ENCODE measurements at regions of chrX and their contacts with region 1.

Region 1: DNA sequence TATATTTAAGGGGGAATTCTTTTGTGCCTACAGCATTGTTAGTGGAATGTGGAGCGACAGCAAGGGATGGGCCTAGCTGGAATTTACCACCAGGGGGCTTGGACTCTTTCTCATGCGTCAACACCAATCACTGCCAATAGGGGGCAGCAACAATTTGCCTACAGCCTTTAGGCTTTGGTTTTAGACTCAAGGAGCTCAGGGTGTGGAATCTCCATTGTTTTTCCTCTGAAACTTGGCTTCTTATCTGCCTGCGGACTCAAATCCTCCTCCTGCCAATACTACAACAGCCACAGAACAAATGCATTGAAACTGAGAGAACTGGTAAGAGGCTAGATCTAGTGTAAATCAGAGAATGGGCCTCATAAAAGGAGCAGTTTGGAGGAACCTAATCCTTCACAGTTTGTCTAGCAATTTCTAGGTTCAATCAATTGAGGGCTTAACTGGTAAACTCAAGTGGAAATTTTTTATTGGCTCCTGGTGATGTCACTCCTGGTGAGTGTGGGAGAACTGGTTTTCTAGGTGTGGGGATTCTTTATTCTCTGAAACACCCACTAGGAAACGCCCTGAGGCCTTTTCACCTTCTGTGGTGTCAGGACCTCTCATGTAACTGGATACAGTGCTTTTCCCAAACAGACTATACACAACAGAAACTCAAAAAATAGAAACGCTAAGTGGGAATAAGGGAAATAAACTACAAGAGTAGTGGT is 27.9 kb upstream of the TMSB4X start:
- DNase-seq: peak; percentile 57 to 83
- ATAC-seq: peak; percentile 78

Region 2: GRCh38 chrX:12497832-12498591 is 449.0 kb before region 1 on chrX:
- intact Hi-C with region 1: no loop called
- DNase-seq: no peak
- ATAC-seq: no peak

Region 3: DNA sequence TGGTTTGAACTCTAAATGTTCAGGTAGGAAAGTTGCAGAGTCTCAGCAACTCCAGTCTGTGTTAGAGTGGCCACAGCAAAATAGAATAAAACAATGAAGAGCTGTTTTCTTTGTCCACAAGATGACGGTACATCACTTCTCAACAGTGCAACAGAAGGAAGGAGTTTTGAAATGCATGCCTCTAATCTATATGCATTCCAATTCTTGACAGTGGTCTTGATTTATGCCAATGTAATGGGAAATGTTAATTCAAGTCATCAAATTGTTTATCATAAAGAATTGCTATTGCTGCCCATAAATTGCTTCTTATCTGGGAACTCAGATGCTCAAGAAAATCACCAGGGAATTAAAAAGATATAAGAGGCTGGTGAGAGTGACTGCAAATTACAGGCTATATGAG is 351.3 kb before region 1 on chrX:
- intact Hi-C with region 1: no loop called
- DNase-seq: no peak
- ATAC-seq: no peak

Region 4: DNA sequence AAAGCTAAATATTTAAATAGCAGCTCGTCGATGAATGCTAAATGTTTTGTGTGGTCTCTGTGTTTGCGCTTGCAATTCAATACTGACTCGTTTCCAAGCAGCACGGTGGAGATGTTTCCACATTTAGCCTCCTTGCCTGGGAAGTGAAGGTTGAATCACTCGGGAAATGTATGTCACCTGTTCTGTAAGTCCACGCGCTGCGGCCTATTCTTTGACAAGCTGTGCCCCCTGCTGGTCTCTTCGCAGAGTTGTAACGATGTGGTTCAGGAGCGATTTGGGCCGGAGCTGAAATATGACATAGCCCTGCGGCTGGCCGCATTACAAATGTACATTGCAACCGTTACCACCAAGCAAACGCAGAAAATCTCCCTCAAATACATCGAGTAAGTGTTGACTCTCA is 245.4 kb before region 1 on chrX:
- intact Hi-C with region 1: no loop called
- DNase-seq: peak; percentile 30 to 48
- ATAC-seq: peak; percentile 71

Region 5: DNA sequence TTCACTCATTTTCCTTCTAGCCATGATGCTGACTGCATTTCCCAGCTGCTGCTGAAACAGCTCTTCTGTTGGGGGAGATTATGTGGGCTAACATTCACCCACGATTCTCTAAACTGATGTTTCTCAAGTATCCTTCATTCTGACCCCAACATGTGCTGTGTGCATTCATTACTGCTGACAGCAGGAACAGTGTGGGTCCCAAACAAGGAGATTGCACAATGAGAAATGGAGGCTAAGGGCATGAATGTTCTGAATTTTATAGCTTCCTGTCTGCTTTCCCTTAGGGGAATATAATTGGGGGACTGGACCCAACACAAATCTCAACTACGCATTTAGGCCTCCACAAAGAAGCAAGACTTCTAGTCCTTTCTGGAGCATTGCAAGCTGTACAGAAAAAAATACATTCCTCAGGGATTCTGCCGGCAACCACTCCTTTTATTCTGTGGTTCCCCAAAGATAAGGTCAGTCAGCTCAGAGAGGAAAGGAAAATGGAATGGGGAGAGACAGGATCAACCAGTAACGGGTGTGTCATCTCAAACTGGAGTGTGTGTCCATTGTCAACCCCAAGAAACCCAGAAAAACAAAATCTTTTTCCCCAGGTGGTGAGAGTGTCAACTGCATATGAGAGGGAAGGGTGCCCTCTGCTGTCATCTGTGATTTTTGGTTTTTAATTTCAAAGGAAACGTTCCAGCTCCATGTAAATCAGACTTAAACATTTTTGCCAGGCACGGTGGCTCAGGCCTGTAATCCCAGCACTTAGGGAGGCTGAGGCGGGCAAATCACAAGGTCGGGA is 540.9 kb after region 1 on chrX:
- intact Hi-C with region 1: loop called in 1 of 2 experiments (anchors 5 kb)
- DNase-seq: peak in 1 of 2 donors; percentile 49
- ATAC-seq: peak; percentile 61

Region 6: DNA sequence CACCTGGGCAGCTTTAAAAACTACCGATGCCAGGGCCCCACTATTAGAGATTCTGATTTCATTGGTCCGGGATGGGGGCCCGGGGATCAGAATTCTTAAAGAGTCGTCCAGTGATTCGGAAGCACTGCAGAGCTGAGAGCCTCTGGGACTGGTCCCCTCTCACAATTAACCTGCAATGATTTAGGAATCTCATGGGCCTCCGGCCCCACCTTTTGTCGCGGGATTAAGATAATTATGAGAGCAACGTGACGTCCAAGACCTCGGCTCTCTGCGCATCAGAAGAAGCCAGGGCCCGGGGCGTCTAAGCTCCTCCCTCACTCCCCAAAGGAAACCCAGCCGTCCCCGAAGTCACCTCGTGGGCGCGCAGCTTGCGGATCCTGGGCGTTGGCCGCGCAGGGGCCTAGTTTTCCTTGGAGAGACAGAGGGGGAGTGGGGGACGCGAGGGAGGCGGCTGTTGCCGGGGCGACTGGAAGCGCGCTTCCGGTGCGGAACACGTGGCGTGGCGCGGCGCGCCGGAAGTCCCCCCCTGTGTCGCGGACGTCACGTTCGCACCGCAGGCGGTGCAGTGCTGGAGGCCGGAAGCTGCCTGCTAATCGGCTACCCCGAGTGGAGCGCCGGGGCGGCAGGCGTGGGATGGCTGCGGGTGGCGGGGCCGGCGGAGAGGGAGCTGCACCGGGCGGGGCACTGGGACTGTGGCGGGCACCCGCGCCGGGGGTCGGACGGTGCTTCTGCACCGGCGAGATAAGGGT is 1082.6 kb after region 1 on chrX and contains the start of gene GEMIN8:
- intact Hi-C with region 1: loop called in 1 of 2 experiments (anchors 5 kb)
- DNase-seq: peak; percentile 89 to 91
- ATAC-seq: peak; percentile 96
- total RNA-seq, gene GEMIN8: 11.8 to 13.3 TPM

Measured in left colon (tissue), 2 donors.